ENCODE measurements at regions of chr9 and their contacts with region 1.

Region 1: DNA sequence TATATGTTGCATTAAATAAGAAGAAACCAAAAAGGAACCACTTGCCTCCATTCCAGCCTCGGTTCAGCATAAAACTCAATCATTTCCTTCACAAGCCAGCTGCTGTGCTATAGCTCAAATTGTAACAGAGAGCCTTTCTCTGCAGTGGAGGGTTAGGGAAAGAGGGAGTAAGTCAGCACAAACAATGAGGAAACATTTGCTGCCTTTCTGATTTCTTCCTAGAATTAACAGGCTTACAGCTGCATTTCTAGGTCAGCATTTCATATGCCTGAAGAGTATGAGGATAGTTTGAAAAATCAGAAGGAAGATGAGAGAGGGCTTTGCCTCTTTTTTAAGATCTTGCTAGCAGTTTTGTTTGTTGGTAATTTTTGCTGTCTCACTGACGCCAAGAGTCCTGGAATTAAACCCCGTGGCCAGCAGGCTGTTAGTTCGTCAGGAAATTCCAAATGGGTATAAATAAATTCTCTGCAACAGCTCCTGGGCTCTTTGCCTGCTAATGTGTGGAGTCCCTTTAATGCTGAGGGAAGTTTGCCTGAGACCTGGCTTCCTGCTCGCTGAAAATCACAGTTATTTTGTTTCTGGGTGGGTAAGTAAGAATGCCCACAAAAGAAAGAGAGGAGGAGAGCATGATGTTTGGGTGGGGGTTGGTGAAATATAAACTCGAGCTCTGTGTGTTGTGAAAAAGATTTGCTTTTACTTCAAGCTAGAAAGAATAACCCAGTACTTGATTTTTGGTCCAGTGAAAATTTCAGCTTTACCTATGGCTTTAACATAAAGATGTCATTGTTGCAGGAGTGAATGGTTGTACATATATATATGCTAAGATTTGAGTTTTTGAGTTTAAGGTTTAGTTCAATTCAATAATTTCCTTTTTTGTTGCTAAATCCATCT is 148.1 kb upstream of the DMRT1 start:
- DNase-seq: no peak
- H3K4me3 ChIP-seq: peak overlapping the region; percentile 20 to 40
- H3K27ac ChIP-seq: peak overlapping the region; percentile 88
- H3K4me1 ChIP-seq: peaks cover 91% of the 10 kb centered on the region
- H3K27me3 ChIP-seq: no peaks in the 10 kb centered on the region
- CTCF ChIP-seq: peak in 1 of 3 experiments; percentile 14
- POLR2A ChIP-seq: no peak

Region 2: DNA sequence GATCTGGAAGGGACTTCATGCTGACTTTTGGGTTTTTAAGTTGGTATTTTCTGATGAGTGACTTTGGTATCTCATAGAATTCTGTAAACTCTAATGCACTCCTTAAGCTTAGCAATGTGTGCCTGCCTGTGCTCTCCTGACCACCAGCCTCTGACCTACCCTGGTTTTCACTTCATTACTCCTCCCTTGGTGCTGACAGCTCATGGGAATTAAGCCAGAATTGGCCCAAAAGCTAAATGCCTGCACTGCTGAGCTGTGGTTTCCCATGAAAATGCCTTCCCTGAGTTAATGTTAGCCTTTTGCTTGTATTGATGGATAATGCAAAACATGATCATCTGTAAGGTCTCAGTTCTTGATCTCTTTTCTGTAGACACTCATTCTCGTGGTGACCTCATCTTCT is 170.8 kb before region 1 on chr9:
- intact Hi-C with region 1: no loop called
- DNase-seq: no peak
- H3K4me3 ChIP-seq: no peak overlapping the region
- H3K27ac ChIP-seq: no peak overlapping the region
- H3K4me1 ChIP-seq: peaks cover 19% of the 10 kb centered on the region
- H3K27me3 ChIP-seq: no peaks in the 10 kb centered on the region
- CTCF ChIP-seq: no peak
- POLR2A ChIP-seq: no peak

Region 3: DNA sequence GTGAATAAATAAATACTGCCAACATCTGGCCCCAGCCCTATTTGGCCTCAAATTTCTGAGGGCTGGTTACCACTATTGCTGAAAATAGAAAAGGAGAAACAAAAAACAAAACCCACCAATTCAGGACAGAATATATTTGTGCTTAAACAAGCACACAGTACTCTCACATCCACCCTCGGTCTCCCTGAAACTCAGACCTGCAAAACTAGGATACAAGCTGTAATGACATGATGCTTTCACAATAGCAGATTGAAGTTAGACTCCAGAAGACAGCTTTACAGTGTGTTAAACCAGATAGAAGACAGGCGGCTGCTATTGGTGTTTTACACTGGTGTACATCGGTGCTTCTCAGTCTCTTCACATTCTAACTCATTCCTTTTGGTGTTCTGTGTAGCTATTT is 66.8 kb before region 1 on chr9:
- intact Hi-C with region 1: loop called (anchors 10 kb)
- DNase-seq: no peak
- H3K4me3 ChIP-seq: peak overlapping the region in 1 of 2 donors; percentile 20
- H3K27ac ChIP-seq: peak overlapping the region; percentile 62
- H3K4me1 ChIP-seq: peaks cover 41% of the 10 kb centered on the region
- H3K27me3 ChIP-seq: no peaks in the 10 kb centered on the region
- CTCF ChIP-seq: peak in 1 of 3 experiments; percentile 7
- POLR2A ChIP-seq: no peak

Measured in vagina (tissue), 2 donors.